Adrenal gland (tissue), 19 donors: ENCODE measurements at regions of chr22 and their contacts with region 1.

Region 1: DNA sequence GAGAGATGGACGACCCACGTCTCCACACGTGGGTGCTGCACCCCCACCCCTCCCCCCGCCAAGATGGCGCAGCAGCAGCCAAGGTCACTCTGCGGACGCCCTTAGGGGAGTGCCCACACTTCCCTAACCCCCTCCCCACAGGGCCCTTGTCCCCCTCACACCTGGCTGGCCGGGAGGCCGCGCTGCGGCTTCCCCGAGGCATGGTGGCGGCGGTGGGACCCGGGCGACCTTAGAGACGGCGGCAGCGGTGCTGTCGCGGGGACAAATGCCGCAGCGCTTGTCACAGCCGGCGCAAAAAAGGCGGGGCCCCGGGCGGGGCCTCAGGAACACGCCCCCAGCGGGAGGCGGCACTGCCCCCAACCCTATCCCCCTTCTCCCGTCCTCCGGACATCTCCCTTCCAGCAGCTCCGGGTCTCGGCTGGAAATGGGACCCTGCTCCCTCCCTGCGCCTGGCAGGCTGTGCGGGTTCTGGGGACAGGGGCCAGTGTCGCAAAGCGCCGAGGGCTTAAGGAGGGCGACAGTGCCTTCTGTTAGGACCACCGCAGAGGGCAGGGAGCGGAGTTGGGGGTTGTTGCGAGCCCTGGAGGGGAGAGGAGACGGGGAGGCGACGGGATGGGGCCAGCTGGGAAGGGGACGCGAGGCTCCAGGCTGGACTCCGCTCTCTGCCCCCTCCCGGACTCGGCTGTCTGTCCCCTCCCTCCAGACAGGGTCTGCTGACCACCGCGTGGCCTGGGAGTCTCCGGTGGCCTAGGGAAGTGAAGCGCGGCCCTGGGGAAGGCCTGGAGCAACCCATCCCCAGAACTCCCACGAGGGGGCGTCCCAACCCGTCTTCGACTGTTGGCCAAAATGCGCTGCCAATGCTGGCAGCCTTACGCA is at the start of gene CHCHD10:
- DNase-seq: peak; percentile 86 to 92 (median 89)
- H3K4me3 ChIP-seq: peak within 1 kb of the TSS; percentile 47 to 88 (median 60)
- H3K27ac ChIP-seq: peak within 1 kb of the TSS; percentile 13 to 88 (median 74)
- H3K4me1 ChIP-seq: peaks cover 0 to 34% of the 10 kb centered on the region in 2 donors
- H3K27me3 ChIP-seq: no peaks in the 10 kb centered on the region
- CTCF ChIP-seq: peak; percentile 59 to 84 (median 75)
- POLR2A ChIP-seq: peak; percentile 72 to 80
- total RNA-seq, gene CHCHD10: 4.6 to 177 (median 118) TPM

Region 2: DNA sequence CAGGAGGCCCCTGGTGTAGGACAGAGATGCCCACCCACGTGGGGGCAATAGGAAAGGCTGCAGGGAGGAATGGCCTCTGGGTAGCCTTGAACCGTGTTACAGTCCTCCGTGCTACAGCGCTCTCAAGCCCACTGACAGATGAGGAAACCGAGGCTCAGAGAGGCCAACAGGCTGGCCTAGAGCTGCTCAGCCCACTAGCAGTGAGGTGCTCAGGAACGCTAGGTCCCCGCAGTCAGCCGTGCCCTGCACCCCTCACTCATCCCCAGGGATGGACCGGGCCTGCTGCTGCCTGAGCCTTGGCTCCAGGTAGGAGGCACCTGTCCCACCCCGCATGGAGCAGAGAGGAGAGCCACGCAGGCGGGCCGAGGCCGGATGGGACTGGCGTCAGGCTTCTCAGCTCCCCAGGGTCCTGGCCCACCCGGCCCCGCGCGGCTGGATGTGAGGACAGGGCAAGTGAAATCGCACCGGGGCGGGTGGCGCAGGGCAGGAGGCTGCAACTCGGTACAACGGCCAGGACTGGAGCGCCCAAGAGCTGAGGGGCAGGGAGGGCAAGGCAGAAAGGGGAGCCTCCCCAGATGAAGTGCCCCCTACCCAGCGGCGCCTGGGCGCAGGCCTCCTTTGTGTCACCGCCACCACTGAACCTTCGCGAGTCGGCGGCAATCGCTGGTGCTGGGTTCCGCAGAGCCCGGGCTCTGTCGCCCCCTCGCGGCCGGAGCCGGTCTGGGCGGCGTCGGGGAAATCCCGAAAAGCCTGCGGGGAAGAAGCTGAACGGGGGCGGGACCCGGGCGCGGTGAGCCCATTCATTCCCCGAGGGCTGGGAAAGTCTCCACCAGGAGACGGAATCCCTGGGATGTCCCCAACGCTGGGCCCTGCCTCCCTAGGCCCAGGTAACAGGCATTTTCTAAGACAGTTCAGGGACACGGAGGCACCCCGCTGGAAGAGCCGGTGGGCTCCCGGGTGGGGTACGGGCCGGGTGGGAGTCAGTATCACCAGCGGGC is 81.4 kb after region 1 on chr22:
- intact Hi-C with region 1: loop called (anchors 5 kb)
- DNase-seq: peak; percentile 73 to 90 (median 84)
- H3K4me3 ChIP-seq: no peak overlapping the region
- H3K27ac ChIP-seq: no peak overlapping the region
- H3K4me1 ChIP-seq: peaks cover 4 to 19% of the 10 kb centered on the region in 2 donors
- H3K27me3 ChIP-seq: no peaks in the 10 kb centered on the region
- CTCF ChIP-seq: peak; percentile 90 to 98 (median 96)
- POLR2A ChIP-seq: no peak

Region 3: GRCh38 chr22:23888615-23889401 is 120.9 kb after region 1 on chr22:
- intact Hi-C with region 1: no loop called
- DNase-seq: peak in 2 of 7 donors; percentile 46 to 52
- H3K4me3 ChIP-seq: no peak overlapping the region
- H3K27ac ChIP-seq: peak overlapping the region; percentile 24 to 77 (median 64)
- H3K4me1 ChIP-seq: peaks cover 10 to 12% of the 10 kb centered on the region in 2 donors
- H3K27me3 ChIP-seq: no peaks in the 10 kb centered on the region
- CTCF ChIP-seq: peak in 3 of 6 experiments; percentile 12 to 39 (median 26)
- POLR2A ChIP-seq: no peak